ENCODE measurements at regions of chr11 and their contacts with region 1.

Region 1: GRCh38 chr11:57240757-57241156 is 3.7 kb upstream of the APLNR start:
- DNase-seq: no peak
- ATAC-seq: no peak
- H3K4me3 ChIP-seq: no peak overlapping the region
- H3K27ac ChIP-seq: no peak overlapping the region
- H3K4me1 ChIP-seq: no peaks in the 10 kb centered on the region
- H3K27me3 ChIP-seq: peaks cover 30% of the 10 kb centered on the region
- CTCF ChIP-seq: no peak
- POLR2A ChIP-seq: no peak
- RAD21 ChIP-seq: no peak

Region 2: DNA sequence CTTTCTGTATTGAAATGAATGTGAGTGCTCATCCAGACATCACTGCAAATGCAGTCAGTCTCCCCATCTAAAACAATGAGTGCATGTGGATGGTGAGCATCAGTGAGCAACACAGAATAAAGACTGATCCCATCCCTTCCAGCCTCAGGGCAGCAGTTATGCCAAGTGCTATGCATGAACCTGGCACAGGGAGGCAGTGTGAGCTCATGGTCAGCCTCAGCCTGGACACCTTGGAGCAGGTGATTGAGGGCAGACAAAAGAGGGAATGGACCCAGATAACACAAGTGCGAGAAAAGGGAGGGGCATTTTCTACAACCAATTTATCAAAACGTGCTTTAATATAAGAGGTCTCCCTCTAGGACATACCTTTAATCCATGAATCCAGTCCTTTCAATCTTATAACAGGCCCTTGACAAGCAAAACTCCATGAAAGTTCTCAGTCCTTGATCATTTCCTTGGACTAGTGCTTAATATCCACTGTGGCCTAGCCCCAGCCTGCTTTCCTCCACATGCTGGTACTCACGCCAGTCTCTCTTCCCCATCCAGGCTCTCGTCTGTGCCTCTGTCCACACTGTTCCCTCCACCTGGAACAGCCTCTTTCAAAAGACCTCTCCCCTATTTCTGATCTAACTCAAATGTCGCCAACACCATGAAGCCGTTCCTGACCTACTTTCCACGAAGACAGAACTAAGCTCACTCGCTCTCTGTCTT is 109.5 kb before region 1 on chr11:
- CTCF ChIA-PET with region 1: no interaction called
- POLR2A ChIA-PET with region 1: no interaction called
- dilution Hi-C with region 1: no loop called
- in situ Hi-C with region 1: loop called (anchors 5 kb)
- intact Hi-C with region 1: no loop called
- DNase-seq: peak; percentile 13
- ATAC-seq: peak; percentile 77
- H3K4me3 ChIP-seq: no peak overlapping the region
- H3K27ac ChIP-seq: no peak overlapping the region
- H3K4me1 ChIP-seq: no peaks in the 10 kb centered on the region
- H3K27me3 ChIP-seq: peaks cover 7% of the 10 kb centered on the region; the same call in 1 of the 2 replicates
- CTCF ChIP-seq: peak; percentile 65
- POLR2A ChIP-seq: no peak
- RAD21 ChIP-seq: peak; percentile 80

Region 3: DNA sequence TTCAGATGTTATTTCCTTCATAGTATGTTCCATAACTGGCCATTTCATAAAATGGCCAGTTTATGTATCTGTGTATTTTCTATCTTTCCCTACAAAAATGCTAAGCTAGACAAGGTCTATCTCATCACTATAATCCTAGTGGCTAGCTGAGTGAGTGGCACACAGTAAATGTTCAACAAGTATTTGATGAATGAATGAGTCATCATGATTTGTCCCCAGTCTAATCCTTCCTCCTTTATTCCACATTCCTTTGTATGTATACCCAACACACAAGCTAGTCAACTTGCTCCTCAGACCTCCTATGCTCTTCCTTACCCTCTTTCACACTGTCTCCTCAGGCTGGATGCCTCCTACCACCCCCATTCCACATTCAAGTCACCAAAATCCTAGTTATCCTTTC is 16.2 kb before region 1 on chr11:
- CTCF ChIA-PET with region 1: no interaction called
- POLR2A ChIA-PET with region 1: no interaction called
- dilution Hi-C with region 1: no loop called
- in situ Hi-C with region 1: no loop called
- intact Hi-C with region 1: no loop called
- DNase-seq: peak; percentile 53
- ATAC-seq: peak; percentile 89
- H3K4me3 ChIP-seq: no peak overlapping the region
- H3K27ac ChIP-seq: no peak overlapping the region
- H3K4me1 ChIP-seq: peaks cover 3% of the 10 kb centered on the region
- H3K27me3 ChIP-seq: no peaks in the 10 kb centered on the region; the same call in none of the 2 replicates
- CTCF ChIP-seq: no peak
- POLR2A ChIP-seq: no peak
- RAD21 ChIP-seq: no peak

Region 4: GRCh38 chr11:57444362-57445121 is 203.8 kb after region 1 on chr11:
- CTCF ChIA-PET with region 1: no interaction called
- POLR2A ChIA-PET with region 1: no interaction called
- dilution Hi-C with region 1: no loop called
- in situ Hi-C with region 1: no loop called
- intact Hi-C with region 1: no loop called
- DNase-seq: no peak
- ATAC-seq: no peak
- H3K4me3 ChIP-seq: no peak overlapping the region
- H3K27ac ChIP-seq: no peak overlapping the region
- H3K4me1 ChIP-seq: no peaks in the 10 kb centered on the region
- H3K27me3 ChIP-seq: peaks cover 10% of the 10 kb centered on the region
- CTCF ChIP-seq: no peak
- POLR2A ChIP-seq: no peak
- RAD21 ChIP-seq: no peak

Region 5: DNA sequence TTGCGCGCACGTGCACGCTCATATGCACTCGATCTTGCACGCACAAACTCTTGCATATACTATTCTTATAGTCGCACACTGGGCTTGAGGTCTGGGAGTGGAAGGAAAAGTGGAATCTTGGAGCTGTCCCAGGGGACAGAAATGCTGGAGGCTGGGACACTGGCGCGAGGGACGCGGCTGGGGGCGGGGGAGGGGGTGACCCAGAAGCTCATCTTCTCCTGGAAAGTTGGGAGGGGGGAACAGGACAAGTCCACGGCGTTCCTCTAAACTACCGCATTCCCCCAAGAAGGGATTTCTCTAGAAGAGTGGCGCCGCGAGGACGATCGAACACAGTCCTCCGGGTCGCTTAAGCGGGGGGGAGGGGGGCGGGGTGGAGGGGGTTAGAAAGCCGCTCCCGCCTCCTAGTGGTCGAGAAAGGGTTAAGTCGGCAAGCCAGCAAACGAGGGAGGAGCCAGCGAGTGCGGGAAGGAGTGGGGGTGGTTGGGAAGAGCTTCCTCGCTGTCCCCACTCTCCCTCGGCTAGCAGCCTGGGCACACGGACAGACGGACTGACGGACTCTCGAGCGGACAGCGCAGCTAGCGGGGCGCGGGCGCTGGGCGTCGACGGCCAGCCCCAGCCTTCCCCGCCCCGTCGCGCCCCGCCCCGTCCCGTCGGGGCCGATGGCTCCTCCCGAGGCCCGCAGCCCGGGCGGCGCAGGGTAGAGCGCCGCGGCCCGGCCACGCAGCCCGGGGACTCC is 219.4 kb after region 1 on chr11 and contains the start of gene RTN4RL2:
- CTCF ChIA-PET with region 1: no interaction called
- POLR2A ChIA-PET with region 1: no interaction called
- dilution Hi-C with region 1: no loop called
- in situ Hi-C with region 1: no loop called
- intact Hi-C with region 1: no loop called
- DNase-seq: peak; percentile 45
- ATAC-seq: peak; percentile 50
- H3K4me3 ChIP-seq: peak within 1 kb of the TSS; percentile 69
- H3K27ac ChIP-seq: no peak within 1 kb of the TSS
- H3K4me1 ChIP-seq: peaks cover 3% of the 10 kb centered on the region; the same call in 1 of the 2 replicates
- H3K27me3 ChIP-seq: peaks cover 60% of the 10 kb centered on the region
- CTCF ChIP-seq: 0 out of 2 replicates have a peak, but pooled peaks have one; percentile 16
- POLR2A ChIP-seq: no peak
- RAD21 ChIP-seq: no peak
- total RNA-seq, gene RTN4RL2: not detected in 2 replicates